ENCODE measurements at regions of chr22 and their contacts with region 1.

Region 1: DNA sequence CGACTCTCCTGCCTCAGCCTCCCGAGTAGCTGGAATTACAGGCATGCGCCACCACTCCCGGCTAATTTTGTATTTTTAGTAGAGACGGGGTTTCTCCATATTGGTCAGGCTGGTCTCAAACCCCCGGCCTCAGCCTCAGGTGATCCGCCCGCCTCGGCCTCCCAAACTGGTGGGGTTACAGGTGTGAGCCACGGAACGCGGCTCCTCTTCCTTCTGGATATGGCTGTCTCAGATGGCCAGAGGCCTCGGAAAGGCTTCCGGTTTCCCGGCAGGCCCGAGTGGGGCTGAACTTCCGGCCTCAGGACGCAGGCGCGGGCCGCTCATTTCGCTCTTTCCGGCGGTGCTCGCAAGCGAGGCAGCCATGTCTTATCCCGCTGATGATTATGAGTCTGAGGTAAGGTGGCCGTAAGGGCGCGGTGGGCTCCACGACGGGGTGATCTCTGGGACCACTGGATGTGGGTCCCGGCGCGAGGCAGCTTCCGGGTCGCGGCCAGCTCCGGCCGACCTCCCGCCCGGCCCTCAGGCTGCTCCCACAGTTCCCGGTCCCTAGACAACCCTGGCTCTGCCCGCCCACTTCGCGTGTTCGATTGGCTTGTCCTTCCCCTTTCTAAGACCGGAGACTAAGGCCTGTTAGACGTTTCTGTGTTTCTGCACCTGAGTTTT is at the start of gene EIF3L:
- DNase-seq: peak; percentile 94
- H3K4me3 Mint-ChIP-seq: peak within 1 kb of the TSS; percentile 91
- H3K27ac Mint-ChIP-seq: peak within 1 kb of the TSS; percentile 93
- H3K4me1 Mint-ChIP-seq: peaks cover 45% of the 10 kb centered on the region
- H3K27me3 Mint-ChIP-seq: no peaks in the 10 kb centered on the region
- total RNA-seq, gene EIF3L: 656 to 664 TPM

Region 2: DNA sequence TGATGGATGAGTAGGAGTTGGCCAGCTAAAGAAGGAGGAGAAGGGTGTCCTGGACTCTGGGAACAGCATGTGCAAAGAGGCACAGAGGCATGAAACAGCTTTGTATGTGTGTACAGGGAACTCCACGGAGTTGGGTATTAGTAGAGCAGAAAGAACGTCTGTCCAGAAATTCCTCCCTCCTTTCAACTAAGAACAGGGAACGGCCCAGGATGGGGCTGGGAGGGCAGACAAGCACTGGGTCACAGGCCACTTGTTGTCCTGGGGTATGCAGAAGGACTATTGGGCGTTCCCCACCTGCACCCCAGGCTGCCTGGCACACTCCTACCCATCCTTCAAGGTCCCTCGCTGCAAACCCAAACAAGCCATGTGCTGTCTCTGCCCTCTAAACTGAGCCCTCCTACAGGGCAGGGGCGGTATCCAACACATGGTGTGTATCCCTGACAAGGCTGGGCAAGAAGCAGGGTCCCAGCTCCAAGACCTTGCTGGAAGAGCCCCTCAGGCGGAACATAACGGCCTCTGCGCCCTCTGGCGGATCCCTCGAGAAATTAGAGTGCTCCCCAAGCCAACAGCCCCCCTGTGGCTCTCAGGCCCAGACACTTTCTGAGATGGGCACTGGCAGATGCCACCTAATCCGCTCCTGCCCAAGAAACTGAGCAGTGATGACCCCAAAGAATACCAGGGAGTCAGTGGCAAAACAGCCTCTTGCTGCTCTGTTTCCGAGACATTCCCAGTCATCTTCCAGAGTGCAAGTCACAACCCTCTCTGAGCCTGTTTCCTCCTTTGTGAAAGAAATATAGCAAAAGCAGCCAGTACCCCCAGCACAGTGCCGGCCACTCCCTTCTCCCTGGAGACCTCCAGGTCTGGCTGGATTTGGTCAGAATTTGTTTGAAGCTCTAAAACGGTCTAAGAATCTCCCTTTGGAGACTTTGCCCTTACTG is 420.3 kb before region 1 on chr22:
- CTCF ChIA-PET with region 1: no interaction called
- POLR2A ChIA-PET with region 1: no interaction called
- intact Hi-C with region 1: no loop called
- DNase-seq: peak; percentile 66
- H3K4me3 Mint-ChIP-seq: no peak overlapping the region
- H3K27ac Mint-ChIP-seq: no peak overlapping the region
- H3K4me1 Mint-ChIP-seq: peaks cover 27% of the 10 kb centered on the region
- H3K27me3 Mint-ChIP-seq: peaks cover 55% of the 10 kb centered on the region

Region 3: GRCh38 chr22:37807410-37808293 is 41.6 kb before region 1 on chr22 and contains the start of gene GCAT:
- CTCF ChIA-PET with region 1: interaction called, 5 read pairs
- POLR2A ChIA-PET with region 1: interaction called, 7 read pairs
- intact Hi-C with region 1: loop called (anchors 2 kb)
- DNase-seq: peak; percentile 96
- H3K4me3 Mint-ChIP-seq: peak within 1 kb of the TSS; percentile 77
- H3K27ac Mint-ChIP-seq: no peak within 1 kb of the TSS
- H3K4me1 Mint-ChIP-seq: peaks cover 33% of the 10 kb centered on the region
- H3K27me3 Mint-ChIP-seq: peaks cover 46% of the 10 kb centered on the region
- total RNA-seq, gene GCAT: 21.8 TPM